ENCODE measurements at regions of chr16 and their contacts with region 1.

Region 1: DNA sequence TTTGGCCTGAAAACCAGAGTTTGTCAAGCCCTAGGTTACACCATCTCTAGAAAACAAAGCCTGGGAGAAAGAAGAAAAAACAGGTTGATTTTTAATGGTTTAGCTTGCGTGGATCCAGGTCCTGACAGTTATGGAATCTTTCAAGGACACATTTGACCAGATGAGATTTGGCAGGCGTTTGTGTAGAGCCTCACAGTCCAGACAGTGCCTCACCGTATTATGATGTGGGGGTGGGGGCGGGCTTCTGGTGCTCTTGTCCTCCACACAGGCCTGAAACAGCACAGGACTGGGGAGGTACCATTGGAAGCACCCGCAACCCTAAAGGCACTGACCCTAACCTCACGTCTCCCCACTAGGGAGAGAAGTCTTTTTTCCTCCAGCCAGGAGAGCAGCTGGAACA is 19.6 kb downstream of the MVP start:
- DNase-seq: no peak
- H3K4me3 ChIP-seq: no peak overlapping the region
- H3K27ac ChIP-seq: no peak overlapping the region
- H3K27me3 ChIP-seq: no peaks in the 10 kb centered on the region
- CTCF ChIP-seq: no peak

Region 2: DNA sequence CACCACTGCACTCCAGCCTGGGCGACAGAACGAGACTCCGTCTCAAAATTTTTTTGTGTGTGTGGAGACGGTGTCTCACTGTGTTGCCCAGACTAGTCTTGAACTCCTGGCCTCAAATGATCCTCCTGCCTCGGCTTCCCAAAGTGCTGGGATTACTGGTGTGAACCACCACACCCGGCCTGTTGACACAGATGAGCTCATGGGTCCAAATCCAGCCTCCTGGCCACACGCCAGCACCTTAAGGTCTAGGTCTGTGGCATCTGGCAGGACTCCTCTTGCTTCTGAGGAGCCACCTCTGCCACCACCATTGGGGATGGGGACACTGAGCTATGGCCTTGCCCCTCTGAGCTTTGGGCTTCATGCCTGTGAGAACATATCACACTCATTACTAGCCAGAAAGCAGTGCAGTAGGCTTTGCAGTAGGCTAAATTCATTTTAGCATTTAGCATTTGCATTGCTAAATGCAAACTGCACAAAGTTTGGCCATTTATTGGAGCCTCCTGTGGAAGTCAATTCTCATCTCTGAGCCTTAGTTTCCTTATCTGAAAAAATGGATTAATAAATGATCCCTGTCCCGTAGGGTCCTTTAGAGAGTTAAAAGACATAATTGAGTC is 28.7 kb after region 1 on chr16:
- CTCF ChIA-PET with region 1: no interaction called
- POLR2A ChIA-PET with region 1: no interaction called
- DNase-seq: no peak
- H3K4me3 ChIP-seq: no peak overlapping the region
- H3K27ac ChIP-seq: no peak overlapping the region
- H3K27me3 ChIP-seq: no peaks in the 10 kb centered on the region
- CTCF ChIP-seq: no peak

Region 3: GRCh38 chr16:30417529-30418349 is 577.9 kb after region 1 on chr16:
- CTCF ChIA-PET with region 1: no interaction called
- POLR2A ChIA-PET with region 1: interaction called, 11 read pairs
- DNase-seq: peak; percentile 80
- H3K4me3 ChIP-seq: peak overlapping the region; percentile 60
- H3K27ac ChIP-seq: no peak overlapping the region
- H3K27me3 ChIP-seq: no peaks in the 10 kb centered on the region
- CTCF ChIP-seq: 0 out of 2 replicates have a peak, but pooled peaks have one; percentile 10